ENCODE measurements at regions of chr2 and their contacts with region 1.

Region 1: DNA sequence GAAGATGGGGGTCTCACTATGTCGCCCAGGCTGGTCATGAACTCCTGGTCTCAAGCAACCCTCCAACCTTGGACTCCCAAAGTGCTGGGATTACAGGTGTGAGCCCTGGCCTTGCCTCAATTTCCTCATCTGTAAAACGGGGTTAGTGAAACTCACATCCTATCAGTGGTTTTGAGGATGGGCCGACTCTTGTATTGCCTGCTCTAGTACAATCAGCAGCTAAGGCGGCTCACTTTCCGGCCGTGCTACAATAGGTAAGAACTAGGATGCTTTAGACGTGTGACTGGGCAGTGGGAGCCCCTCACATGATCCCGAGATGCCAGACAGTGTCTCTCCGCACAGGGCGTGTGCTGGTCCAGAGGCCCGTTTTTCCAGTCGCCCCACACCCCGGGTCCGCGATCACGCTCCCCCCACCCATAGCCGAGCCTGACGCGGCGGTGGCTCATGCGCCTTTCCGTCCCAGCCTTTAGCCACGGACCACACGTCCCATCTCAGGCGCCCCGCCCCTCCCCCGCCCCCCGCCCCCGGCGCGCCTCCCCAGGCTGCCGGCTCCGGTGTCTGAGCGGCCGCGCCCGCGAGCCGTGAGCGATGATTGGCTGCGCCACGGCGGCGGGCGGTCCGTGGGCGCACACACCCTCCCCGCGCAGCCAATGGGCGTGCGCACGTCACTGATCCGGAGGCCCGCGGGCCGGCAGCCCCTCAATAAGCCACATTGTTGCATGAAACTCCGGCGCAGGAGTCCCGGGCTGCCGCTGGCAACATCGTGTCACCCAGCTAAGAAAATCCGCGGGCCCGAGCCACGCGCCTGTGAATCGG is at the start of gene HK2:
- DNase-seq: peak; percentile 82
- ATAC-seq: peak; percentile 63
- H3K4me3 Mint-ChIP-seq: peak within 1 kb of the TSS; percentile 86
- H3K27ac Mint-ChIP-seq: peak within 1 kb of the TSS; percentile 94
- H3K4me1 Mint-ChIP-seq: peaks cover 49% of the 10 kb centered on the region
- H3K27me3 Mint-ChIP-seq: no peaks in the 10 kb centered on the region
- CTCF ChIP-seq: no peak
- total RNA-seq, gene HK2: 61.6 to 74.5 TPM (median 73.9 TPM) in 3 replicates

Region 2: DNA sequence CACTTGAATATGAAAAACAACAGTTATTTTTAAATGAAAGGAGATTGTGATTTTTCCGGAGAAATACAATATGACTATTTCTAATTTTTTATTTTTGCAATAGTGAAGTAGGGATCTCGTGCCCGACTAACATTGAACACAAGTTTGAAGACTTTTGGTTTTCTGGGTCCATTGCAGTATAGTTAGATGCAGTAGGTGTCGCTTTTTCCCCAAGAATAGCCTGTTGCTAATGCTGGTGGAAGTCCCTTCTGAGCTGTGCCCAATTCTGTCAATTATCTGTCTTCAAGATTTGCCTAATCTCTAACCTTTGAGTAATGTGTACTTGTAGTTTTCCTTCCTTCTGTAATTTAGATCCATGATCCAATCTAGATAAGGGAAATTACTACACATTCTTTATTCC is 143.1 kb before region 1 on chr2:
- CTCF ChIA-PET with region 1: interaction called, 22 read pairs
- POLR2A ChIA-PET with region 1: interaction called, 3 read pairs
- DNase-seq: no peak
- ATAC-seq: peak; percentile 83
- H3K4me3 Mint-ChIP-seq: no peak overlapping the region
- H3K27ac Mint-ChIP-seq: no peak overlapping the region
- H3K4me1 Mint-ChIP-seq: no peaks in the 10 kb centered on the region
- H3K27me3 Mint-ChIP-seq: no peaks in the 10 kb centered on the region
- CTCF ChIP-seq: peak; percentile 35

Region 3: GRCh38 chr2:74849228-74849892 is 15.7 kb after region 1 on chr2:
- CTCF ChIA-PET with region 1: interaction called, 39 read pairs
- POLR2A ChIA-PET with region 1: interaction called, 13 read pairs
- DNase-seq: no peak
- ATAC-seq: peak; percentile 74
- H3K4me3 Mint-ChIP-seq: peak overlapping the region; percentile 58
- H3K27ac Mint-ChIP-seq: peak overlapping the region; percentile 99
- H3K4me1 Mint-ChIP-seq: peaks cover 85% of the 10 kb centered on the region
- H3K27me3 Mint-ChIP-seq: no peaks in the 10 kb centered on the region
- CTCF ChIP-seq: no peak

Region 4: DNA sequence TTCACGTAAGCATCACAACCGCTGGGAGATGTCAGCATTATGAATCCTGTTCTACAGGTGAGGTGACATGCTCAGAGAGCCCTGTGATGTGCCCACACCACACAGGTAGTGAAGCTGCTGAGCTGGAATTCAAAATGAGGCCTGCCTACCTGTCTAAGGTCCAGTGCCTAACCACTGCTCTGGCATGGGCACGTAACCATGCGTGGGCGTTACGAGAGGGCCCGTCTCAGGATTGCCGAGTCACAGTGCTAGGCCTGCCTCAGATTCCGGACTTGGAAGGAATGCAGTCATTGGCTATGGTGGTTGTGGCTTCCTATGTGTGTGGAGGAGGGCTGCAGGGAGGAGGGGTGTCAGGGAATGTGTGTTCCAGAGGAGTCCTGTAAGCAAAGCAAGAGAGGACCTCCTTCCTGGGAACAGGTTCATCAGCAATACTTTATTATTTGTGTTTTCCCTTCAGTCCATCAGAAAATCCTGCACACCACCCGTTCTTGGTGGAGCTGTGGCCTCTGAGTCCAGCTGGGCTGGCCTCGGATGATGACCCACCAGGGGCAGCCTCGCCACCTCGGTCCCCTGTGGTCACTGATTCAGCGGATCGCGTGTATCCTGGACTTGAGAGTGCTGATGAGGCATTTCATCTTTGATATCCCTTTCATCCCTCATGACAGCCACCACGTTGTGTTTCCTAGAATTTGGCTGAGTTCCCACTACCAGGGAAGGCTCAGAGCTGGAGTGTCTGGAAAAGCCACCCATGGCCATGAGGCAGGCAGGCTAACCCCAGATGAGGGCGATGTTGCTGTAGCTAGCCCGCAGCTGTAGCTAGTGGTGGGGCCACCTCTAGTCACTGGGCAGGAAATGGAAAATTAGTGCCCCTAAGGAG is 31.5 kb after region 1 on chr2:
- CTCF ChIA-PET with region 1: interaction called, 15 read pairs
- POLR2A ChIA-PET with region 1: interaction called, 5 read pairs
- DNase-seq: peak; percentile 20
- ATAC-seq: peak; percentile 73
- H3K4me3 Mint-ChIP-seq: no peak overlapping the region
- H3K27ac Mint-ChIP-seq: no peak overlapping the region; the same call in 1 of the 2 replicates
- H3K4me1 Mint-ChIP-seq: peaks cover 66% of the 10 kb centered on the region
- H3K27me3 Mint-ChIP-seq: no peaks in the 10 kb centered on the region
- CTCF ChIP-seq: no peak

Region 5: DNA sequence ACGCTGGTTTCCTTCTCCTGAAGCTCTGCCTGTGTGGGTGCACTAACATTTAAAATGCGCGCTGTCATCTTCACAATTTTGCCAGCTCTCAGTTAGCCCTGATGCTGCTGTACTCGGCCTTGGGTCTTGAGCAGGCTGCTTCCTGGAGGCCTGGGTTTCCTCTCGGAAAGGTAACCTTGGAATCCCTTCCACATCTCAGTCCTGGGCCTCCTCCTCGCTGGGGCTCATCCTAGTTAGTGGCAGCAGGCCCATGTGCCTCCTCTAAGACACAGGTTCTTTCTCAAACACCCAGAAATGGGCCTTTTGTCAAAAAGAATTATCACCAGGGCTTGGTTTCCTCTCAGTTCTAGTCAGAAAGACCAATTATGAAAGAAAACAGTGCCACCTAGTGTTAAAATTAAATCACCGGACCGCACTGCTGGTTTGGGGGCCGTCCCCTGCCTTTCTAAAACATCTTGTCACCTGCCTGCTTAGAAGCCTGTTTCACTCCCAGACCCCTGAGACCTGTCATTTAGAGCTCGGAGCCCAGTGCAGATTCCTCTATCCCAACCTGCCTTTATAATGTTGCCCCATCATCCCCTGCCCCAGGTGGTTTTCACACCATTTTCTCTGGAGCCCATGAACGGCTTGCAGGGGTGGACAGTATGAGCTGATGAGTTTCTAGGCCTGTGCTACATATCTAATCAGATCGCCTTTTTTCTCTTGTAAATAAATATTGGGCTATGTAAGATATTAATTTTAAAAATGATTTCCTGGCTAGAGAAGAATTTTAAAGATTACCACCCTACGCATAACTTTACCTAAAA is 42.7 kb after region 1 on chr2:
- CTCF ChIA-PET with region 1: interaction called, 35 read pairs
- POLR2A ChIA-PET with region 1: interaction called, 6 read pairs
- DNase-seq: peak; percentile 28
- ATAC-seq: peak; percentile 76
- H3K4me3 Mint-ChIP-seq: no peak overlapping the region
- H3K27ac Mint-ChIP-seq: 0 out of 2 replicates have a peak overlapping the region, but pooled peaks have one; percentile 39
- H3K4me1 Mint-ChIP-seq: no peaks in the 10 kb centered on the region; the same call in 1 of the 2 replicates
- H3K27me3 Mint-ChIP-seq: no peaks in the 10 kb centered on the region
- CTCF ChIP-seq: no peak; the same call in none of the 2 replicates